Right cardiac atrium (tissue), 5 donors: ENCODE measurements at regions of chr13 and their contacts with region 1.

Region 1: GRCh38 chr13:27533155-27533643 is 82.8 kb upstream of the MTIF3 start:
- DNase-seq: peak; percentile 86 to 96 (median 93)
- ATAC-seq: peak; percentile 96 to 97
- H3K4me3 ChIP-seq: peak overlapping the region; percentile 8
- H3K27ac ChIP-seq: no peak overlapping the region
- H3K4me1 ChIP-seq: no peaks in the 10 kb centered on the region
- H3K27me3 ChIP-seq: no peaks in the 10 kb centered on the region

Region 2: DNA sequence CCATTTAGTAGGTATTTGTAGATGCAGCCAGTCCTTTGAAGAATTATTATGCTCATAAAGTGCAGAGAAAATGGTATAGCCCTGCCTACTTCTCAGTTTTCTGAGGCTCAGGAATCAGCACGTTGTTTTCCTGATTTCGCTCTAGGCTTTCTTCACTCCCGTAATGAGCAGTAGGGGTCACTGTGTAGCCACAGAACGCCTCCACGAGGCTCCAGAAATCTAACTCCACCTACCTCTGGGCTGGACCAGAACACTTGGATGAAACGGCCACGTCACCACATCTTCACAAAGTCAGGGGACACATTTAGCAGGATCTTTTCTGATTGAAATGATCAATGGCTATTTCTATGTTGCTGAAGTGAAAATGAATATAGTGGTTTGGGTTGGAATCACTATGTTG is 158.5 kb before region 1 on chr13:
- intact Hi-C with region 1: loop called in 1 of 4 experiments (anchors 10 kb)
- DNase-seq: peak; percentile 68 to 75 (median 71)
- ATAC-seq: peak; percentile 95 to 97
- H3K4me3 ChIP-seq: no peak overlapping the region
- H3K27ac ChIP-seq: no peak overlapping the region
- H3K4me1 ChIP-seq: no peaks in the 10 kb centered on the region
- H3K27me3 ChIP-seq: no peaks in the 10 kb centered on the region

Region 3: DNA sequence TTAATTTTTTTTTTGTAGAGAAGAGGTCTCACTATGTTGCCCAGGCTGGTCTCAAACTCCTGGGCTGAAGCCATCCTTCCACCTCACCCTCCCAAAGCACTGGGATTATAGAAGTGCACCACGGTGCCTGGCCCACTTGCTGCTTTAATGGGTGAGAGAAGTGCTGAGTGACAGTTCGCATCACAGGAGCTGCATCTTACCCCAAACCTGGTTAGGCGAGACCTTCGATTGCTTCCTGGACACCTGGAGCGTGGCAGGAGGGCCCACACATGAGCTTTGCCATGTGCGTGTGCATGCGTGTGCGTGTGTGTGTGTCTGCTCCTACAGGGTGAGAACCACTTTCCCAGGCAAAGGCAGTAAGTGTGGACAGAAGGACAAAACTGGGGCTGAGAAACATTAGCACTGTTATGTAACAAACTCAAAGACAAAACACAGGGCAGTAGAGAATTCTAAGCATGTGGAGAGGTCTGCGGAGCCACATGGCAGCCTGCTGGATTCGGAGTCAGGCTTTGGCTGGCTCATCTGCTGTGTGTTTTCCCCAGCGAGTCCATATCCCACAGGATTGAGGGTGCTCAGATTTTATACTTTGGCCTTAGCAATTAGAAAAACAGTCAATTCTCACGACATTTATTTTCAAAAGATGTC is 71.1 kb before region 1 on chr13:
- intact Hi-C with region 1: no loop called
- DNase-seq: no peak
- ATAC-seq: peak in 1 of 2 donors; percentile 40
- H3K4me3 ChIP-seq: no peak overlapping the region
- H3K27ac ChIP-seq: no peak overlapping the region
- H3K4me1 ChIP-seq: no peaks in the 10 kb centered on the region
- H3K27me3 ChIP-seq: no peaks in the 10 kb centered on the region

Region 4: GRCh38 chr13:27712421-27712820 is 179.2 kb after region 1 on chr13:
- intact Hi-C with region 1: loop called in 3 of 4 experiments (anchors 5 to 10 kb)
- DNase-seq: peak in 1 of 3 donors; percentile 54
- ATAC-seq: no peak
- H3K4me3 ChIP-seq: no peak overlapping the region
- H3K27ac ChIP-seq: no peak overlapping the region
- H3K4me1 ChIP-seq: no peaks in the 10 kb centered on the region
- H3K27me3 ChIP-seq: no peaks in the 10 kb centered on the region

Region 5: GRCh38 chr13:27783111-27783510 is 249.9 kb after region 1 on chr13:
- intact Hi-C with region 1: loop called in 1 of 4 experiments (anchors 10 kb)
- DNase-seq: no peak
- ATAC-seq: no peak
- H3K4me3 ChIP-seq: no peak overlapping the region
- H3K27ac ChIP-seq: no peak overlapping the region
- H3K4me1 ChIP-seq: no peaks in the 10 kb centered on the region
- H3K27me3 ChIP-seq: no peaks in the 10 kb centered on the region